ENCODE measurements at regions of chr4 and their contacts with region 1.

Region 1: DNA sequence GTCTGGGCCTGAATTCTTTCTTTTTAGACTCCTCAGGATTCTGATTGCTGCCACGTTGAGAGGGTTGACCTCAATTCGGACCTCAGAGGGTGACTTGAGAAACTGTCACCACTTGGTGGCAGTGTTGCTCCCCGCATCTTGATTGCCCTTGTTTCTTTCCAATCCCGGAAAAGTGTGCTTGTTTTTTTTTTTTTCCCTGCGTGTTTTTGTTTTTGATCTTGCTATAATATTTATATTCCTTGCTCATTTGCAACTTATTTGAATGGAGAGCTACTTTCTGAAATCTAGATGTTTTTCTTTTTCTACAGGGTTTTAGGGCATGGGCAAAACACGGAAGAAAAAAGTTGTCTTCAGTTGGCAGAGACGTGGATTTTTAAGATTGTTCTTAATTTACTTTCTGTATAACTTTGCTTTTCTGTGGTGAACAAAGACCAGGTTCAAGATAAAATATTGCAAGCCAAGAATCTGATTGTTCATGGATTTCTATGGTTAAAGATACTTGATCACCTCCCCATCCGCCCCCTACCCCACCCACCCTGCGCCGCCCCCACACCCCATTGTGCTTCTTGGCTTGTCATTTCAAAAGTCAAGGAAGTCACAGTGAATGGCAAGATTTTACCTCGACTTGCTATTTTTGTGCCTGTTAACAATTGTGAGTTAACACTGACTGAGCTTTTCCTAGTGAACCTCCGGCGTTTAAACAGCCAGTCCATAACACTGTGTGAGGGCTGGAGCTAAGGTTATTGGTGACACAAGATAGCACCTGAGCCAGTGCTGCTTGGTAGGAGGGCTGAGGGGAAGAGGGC is 102.1 kb downstream of the PTTG2 start:
- DNase-seq: peak; percentile 80
- H3K4me3 ChIP-seq: peak overlapping the region; percentile 24
- H3K27ac ChIP-seq: peak overlapping the region; percentile 33 to 59
- H3K4me1 ChIP-seq: no peaks in the 10 kb centered on the region
- H3K27me3 ChIP-seq: no peaks in the 10 kb centered on the region
- CTCF ChIP-seq: peak; percentile 69 to 83 (median 76)
- POLR2A ChIP-seq: no peak

Region 2: GRCh38 chr4:38730830-38731646 is 668.7 kb after region 1 on chr4:
- intact Hi-C with region 1: loop called (anchors 2 kb)
- DNase-seq: peak; percentile 73
- H3K4me3 ChIP-seq: no peak overlapping the region
- H3K27ac ChIP-seq: no peak overlapping the region
- H3K4me1 ChIP-seq: no peaks in the 10 kb centered on the region
- H3K27me3 ChIP-seq: no peaks in the 10 kb centered on the region
- CTCF ChIP-seq: peak; percentile 91 to 94 (median 92)
- POLR2A ChIP-seq: no peak

Measured in prostate gland (tissue), 2 donors.